ENCODE measurements at regions of chr10 and their contacts with region 1.

Region 1: GRCh38 chr10:26881600-26882331 is 21.0 kb upstream of the ABI1 start:
- DNase-seq: peak; percentile 41
- H3K4me3 Mint-ChIP-seq: no peak overlapping the region
- H3K27ac Mint-ChIP-seq: no peak overlapping the region
- H3K4me1 Mint-ChIP-seq: peaks cover 3% of the 10 kb centered on the region
- H3K27me3 Mint-ChIP-seq: peaks cover 13% of the 10 kb centered on the region

Region 2: GRCh38 chr10:26725837-26726727 is 155.7 kb before region 1 on chr10:
- CTCF ChIA-PET with region 1: interaction called, 13 read pairs
- POLR2A ChIA-PET with region 1: no interaction called
- DNase-seq: peak; percentile 44
- H3K4me3 Mint-ChIP-seq: no peak overlapping the region
- H3K27ac Mint-ChIP-seq: no peak overlapping the region
- H3K4me1 Mint-ChIP-seq: peaks cover 15% of the 10 kb centered on the region
- H3K27me3 Mint-ChIP-seq: no peaks in the 10 kb centered on the region

Region 3: GRCh38 chr10:26903431-26904217 is 21.9 kb after region 1 on chr10:
- CTCF ChIA-PET with region 1: no interaction called
- POLR2A ChIA-PET with region 1: no interaction called
- DNase-seq: no peak
- H3K4me3 Mint-ChIP-seq: no peak overlapping the region
- H3K27ac Mint-ChIP-seq: no peak overlapping the region
- H3K4me1 Mint-ChIP-seq: no peaks in the 10 kb centered on the region
- H3K27me3 Mint-ChIP-seq: peaks cover 6% of the 10 kb centered on the region